Adrenal gland (tissue), 19 donors: ENCODE measurements at regions of chr1 and their contacts with region 1.

Region 1: GRCh38 chr1:9145021-9145668 is 16.2 kb upstream of the GPR157 start:
- DNase-seq: peak; percentile 86 to 97 (median 95)
- H3K4me3 ChIP-seq: no peak overlapping the region
- H3K27ac ChIP-seq: peak overlapping the region; percentile 28 to 79 (median 63)
- H3K4me1 ChIP-seq: peaks cover 7 to 11% of the 10 kb centered on the region in 2 donors
- H3K27me3 ChIP-seq: no peaks in the 10 kb centered on the region
- CTCF ChIP-seq: no peak
- POLR2A ChIP-seq: peak in 1 of 2 donors; percentile 40

Region 2: GRCh38 chr1:8939362-8939995 is 205.7 kb before region 1 on chr1:
- intact Hi-C with region 1: no loop called
- DNase-seq: no peak
- H3K4me3 ChIP-seq: no peak overlapping the region
- H3K27ac ChIP-seq: no peak overlapping the region
- H3K4me1 ChIP-seq: no peaks in the 10 kb centered on the region
- H3K27me3 ChIP-seq: no peaks in the 10 kb centered on the region
- CTCF ChIP-seq: no peak
- POLR2A ChIP-seq: no peak

Region 3: GRCh38 chr1:9181176-9181906 is 36.2 kb after region 1 on chr1:
- intact Hi-C with region 1: loop called in 1 of 2 experiments (anchors 5 kb)
- DNase-seq: peak; percentile 59 to 82 (median 77)
- H3K4me3 ChIP-seq: peak overlapping the region; percentile 22 to 97 (median 58)
- H3K27ac ChIP-seq: peak overlapping the region; percentile 40 to 94 (median 85)
- H3K4me1 ChIP-seq: peaks cover 16 to 33% of the 10 kb centered on the region in 2 donors
- H3K27me3 ChIP-seq: no peaks in the 10 kb centered on the region
- CTCF ChIP-seq: peak; percentile 85 to 95 (median 94)
- POLR2A ChIP-seq: peak in 1 of 2 donors; percentile 5